Activated naive CD4-positive, alpha-beta T cell treated with anti-CD3 and anti-CD28 coated beads for 36 hours (primary cell): ENCODE measurements at regions of chr19 and their contacts with region 1.

Region 1: GRCh38 chr19:19203012-19203856 is at the start of gene NR2C2AP:
- DNase-seq: peak; percentile 93
- H3K4me3 Mint-ChIP-seq: peak within 1 kb of the TSS; percentile 90
- H3K27ac Mint-ChIP-seq: peak within 1 kb of the TSS; percentile 89
- H3K4me1 Mint-ChIP-seq: peaks cover 33% of the 10 kb centered on the region
- H3K27me3 Mint-ChIP-seq: peaks cover 2% of the 10 kb centered on the region
- total RNA-seq, gene NR2C2AP: 32.4 to 34.2 TPM

Region 2: GRCh38 chr19:19115954-19116353 is 87.3 kb before region 1 on chr19:
- CTCF ChIA-PET with region 1: no interaction called
- intact Hi-C with region 1: no loop called
- DNase-seq: peak; percentile 60
- H3K4me3 Mint-ChIP-seq: no peak overlapping the region
- H3K27ac Mint-ChIP-seq: no peak overlapping the region
- H3K4me1 Mint-ChIP-seq: no peaks in the 10 kb centered on the region
- H3K27me3 Mint-ChIP-seq: no peaks in the 10 kb centered on the region

Region 3: DNA sequence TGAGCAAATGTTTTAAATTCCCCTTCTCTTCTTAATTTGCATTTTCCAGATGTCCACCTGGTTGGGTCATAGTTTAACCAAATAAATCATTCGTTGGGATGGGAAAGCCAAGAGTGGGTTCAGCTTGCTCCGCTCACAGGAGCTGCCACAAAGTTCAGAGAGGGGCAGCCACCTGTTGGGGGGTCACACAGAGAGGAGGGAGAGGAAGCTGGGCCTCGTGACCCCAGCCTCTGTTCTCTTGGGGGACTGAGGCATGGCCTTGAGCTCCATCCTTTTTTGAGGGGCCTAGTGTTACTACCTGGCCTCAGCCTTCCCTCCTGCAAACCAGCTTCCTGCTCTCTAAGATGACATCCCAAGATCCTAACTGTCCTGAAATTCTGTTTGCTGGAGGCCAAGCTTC is 35.6 kb before region 1 on chr19:
- CTCF ChIA-PET with region 1: no interaction called
- intact Hi-C with region 1: no loop called
- DNase-seq: no peak
- H3K4me3 Mint-ChIP-seq: no peak overlapping the region
- H3K27ac Mint-ChIP-seq: no peak overlapping the region
- H3K4me1 Mint-ChIP-seq: peaks cover 11% of the 10 kb centered on the region
- H3K27me3 Mint-ChIP-seq: no peaks in the 10 kb centered on the region

Region 4: GRCh38 chr19:19224852-19225494 is 21.7 kb after region 1 on chr19:
- CTCF ChIA-PET with region 1: interaction called, 5 read pairs
- intact Hi-C with region 1: loop called (anchors 1 kb)
- DNase-seq: peak; percentile 81
- H3K4me3 Mint-ChIP-seq: peak overlapping the region; percentile 56
- H3K27ac Mint-ChIP-seq: no peak overlapping the region
- H3K4me1 Mint-ChIP-seq: peaks cover 2% of the 10 kb centered on the region
- H3K27me3 Mint-ChIP-seq: peaks cover 12% of the 10 kb centered on the region

Region 5: DNA sequence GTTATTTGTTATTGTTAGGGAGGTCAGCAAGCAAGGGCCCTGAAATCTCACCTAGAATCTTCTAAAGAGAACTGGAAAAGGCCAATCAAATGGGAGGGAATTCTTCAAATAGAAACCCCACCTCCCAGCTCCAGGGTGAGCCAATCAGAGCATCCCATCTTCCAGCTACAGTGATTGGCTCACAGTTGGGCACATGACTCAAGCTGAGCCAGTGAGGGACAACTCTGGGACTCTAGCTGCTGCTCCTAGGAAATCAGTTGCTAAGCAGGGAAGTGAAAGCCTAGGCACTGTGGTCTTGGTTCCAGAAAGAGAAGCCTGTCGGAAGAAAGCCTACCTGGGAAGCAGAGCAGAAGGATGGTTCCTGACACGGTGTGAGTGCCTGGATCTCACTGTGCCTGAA is 56.5 kb after region 1 on chr19:
- CTCF ChIA-PET with region 1: no interaction called
- intact Hi-C with region 1: no loop called
- DNase-seq: no peak
- H3K4me3 Mint-ChIP-seq: no peak overlapping the region
- H3K27ac Mint-ChIP-seq: no peak overlapping the region
- H3K4me1 Mint-ChIP-seq: peaks cover 9% of the 10 kb centered on the region
- H3K27me3 Mint-ChIP-seq: peaks cover 56% of the 10 kb centered on the region

Region 6: GRCh38 chr19:19404879-19405860 is 201.9 kb after region 1 on chr19 and contains the start of gene GATAD2A:
- CTCF ChIA-PET with region 1: no interaction called
- intact Hi-C with region 1: loop called (anchors 2 kb)
- DNase-seq: peak; percentile 88
- H3K4me3 Mint-ChIP-seq: peak within 1 kb of the TSS; percentile 86
- H3K27ac Mint-ChIP-seq: peak within 1 kb of the TSS; percentile 91
- H3K4me1 Mint-ChIP-seq: peaks cover 63% of the 10 kb centered on the region
- H3K27me3 Mint-ChIP-seq: no peaks in the 10 kb centered on the region
- total RNA-seq, gene GATAD2A: 91.2 to 100 TPM